A673 (cell line): ENCODE measurements at regions of chr18 and their contacts with region 1.

Region 1: GRCh38 chr18:62131301-62131909 is 55.5 kb downstream of the PIGN start:
- DNase-seq: peak; percentile 69
- H3K4me3 ChIP-seq: no peak overlapping the region
- H3K27ac ChIP-seq: no peak overlapping the region
- H3K4me1 ChIP-seq: peaks cover 5% of the 10 kb centered on the region
- H3K27me3 ChIP-seq: no peaks in the 10 kb centered on the region
- CTCF ChIP-seq: peak; percentile 89

Region 2: DNA sequence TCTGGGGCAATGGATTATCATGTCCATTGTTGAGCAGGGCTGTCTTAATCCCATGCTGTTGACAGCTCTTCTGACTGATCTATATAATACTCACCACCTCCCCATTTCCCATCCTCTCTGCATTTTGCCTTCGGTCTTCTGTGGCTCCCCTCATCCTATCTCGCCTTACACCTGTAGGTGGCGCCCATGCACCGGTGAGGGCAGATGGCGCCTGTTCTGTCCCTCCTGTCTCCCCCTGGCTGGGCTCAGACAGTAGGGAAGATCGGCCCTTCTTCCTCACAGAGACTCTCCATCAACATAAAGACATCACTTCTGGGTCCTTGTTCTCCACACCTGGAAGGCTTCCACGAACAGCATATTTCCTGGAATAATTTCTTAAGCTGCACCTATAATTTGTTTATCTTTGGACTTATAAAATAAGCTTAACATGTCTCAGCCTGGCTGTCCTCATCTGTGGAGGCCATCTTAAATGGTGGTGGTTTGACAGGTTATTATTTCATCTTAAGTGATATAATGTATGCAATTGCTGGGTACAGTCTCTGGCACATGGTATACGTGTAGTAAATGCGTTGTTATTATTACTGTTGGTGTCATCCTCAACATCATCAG is 809.0 kb before region 1 on chr18:
- CTCF ChIA-PET with region 1: no interaction called
- POLR2A ChIA-PET with region 1: no interaction called
- intact Hi-C with region 1: loop called (anchors 2 kb)
- DNase-seq: peak; percentile 77
- H3K4me3 ChIP-seq: no peak overlapping the region
- H3K27ac ChIP-seq: no peak overlapping the region
- H3K4me1 ChIP-seq: no peaks in the 10 kb centered on the region
- H3K27me3 ChIP-seq: peaks cover 42% of the 10 kb centered on the region
- CTCF ChIP-seq: peak; percentile 92

Region 3: GRCh38 chr18:61551586-61551985 is 579.8 kb before region 1 on chr18:
- CTCF ChIA-PET with region 1: no interaction called
- POLR2A ChIA-PET with region 1: no interaction called
- intact Hi-C with region 1: loop called (anchors 1 kb)
- DNase-seq: peak; percentile 83
- H3K4me3 ChIP-seq: no peak overlapping the region
- H3K27ac ChIP-seq: no peak overlapping the region
- H3K4me1 ChIP-seq: peaks cover 3% of the 10 kb centered on the region
- H3K27me3 ChIP-seq: no peaks in the 10 kb centered on the region
- CTCF ChIP-seq: peak; percentile 87

Region 4: DNA sequence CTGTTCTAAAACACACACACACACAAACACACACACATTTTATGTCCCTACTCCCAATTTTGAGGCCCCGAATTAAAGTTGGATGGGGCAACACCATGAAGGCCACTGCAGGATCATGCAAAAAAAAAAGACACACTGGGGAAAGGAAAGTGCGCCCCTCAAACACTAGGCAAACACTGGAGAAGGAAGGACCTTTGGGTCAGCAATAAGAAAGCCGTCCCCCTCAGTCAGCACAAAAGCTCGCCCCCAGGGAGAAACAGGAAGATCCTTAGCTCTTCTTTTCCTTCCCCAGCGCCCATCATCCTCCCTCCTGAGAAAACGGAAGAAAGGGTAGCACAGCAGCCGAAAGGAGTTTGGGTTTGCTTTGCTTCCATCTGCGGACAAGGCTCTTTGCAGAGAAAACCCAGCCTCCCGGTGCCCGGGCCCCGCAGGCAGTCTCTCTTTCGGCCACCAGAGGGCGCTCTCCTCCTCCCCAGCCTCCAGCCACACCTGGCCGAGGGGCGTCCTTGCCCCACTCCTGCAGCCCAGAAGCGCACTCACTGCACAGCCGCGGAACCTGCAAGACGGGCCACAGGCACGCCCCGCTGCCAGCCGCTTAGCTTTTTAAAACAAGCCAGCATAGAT is 549.7 kb before region 1 on chr18:
- CTCF ChIA-PET with region 1: no interaction called
- POLR2A ChIA-PET with region 1: no interaction called
- intact Hi-C with region 1: loop called (anchors 2 kb)
- DNase-seq: peak; percentile 79
- H3K4me3 ChIP-seq: peak overlapping the region; percentile 43
- H3K27ac ChIP-seq: no peak overlapping the region
- H3K4me1 ChIP-seq: peaks cover 1% of the 10 kb centered on the region
- H3K27me3 ChIP-seq: no peaks in the 10 kb centered on the region
- CTCF ChIP-seq: peak; percentile 99

Region 5: DNA sequence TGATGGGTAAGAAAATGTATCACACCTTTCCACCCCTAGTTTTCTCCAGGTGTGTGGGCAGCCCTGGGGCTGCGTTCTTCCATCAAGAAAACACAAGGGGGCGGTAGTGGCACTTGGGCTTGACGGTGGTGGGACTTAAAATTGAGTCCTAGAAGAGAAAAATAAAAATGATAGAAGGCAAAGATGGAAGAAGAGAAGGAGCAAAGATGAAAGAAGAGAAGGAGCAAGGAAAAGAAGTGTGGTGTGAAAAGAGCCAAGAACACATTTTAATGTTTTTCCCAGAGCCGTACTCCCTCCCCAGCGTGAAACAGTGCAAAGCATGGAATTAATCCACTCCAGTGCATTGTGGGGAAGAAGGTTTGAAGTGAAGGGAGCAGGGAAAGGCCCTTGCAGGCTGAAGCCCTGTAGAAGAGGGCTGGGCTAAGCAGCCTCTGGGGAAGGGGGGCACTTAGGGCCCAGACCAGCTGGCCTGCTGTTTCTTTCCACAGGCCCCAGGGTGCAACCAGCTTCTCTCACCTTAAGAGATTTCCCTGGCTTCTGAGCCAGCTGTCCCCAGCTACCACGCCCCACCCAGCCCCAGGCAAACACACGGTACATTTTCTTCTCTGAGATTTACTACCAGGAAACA is 495.4 kb before region 1 on chr18:
- CTCF ChIA-PET with region 1: no interaction called
- POLR2A ChIA-PET with region 1: no interaction called
- intact Hi-C with region 1: loop called (anchors 1 kb)
- DNase-seq: peak; percentile 60
- H3K4me3 ChIP-seq: no peak overlapping the region
- H3K27ac ChIP-seq: no peak overlapping the region
- H3K4me1 ChIP-seq: no peaks in the 10 kb centered on the region
- H3K27me3 ChIP-seq: no peaks in the 10 kb centered on the region
- CTCF ChIP-seq: peak; percentile 93

Region 6: DNA sequence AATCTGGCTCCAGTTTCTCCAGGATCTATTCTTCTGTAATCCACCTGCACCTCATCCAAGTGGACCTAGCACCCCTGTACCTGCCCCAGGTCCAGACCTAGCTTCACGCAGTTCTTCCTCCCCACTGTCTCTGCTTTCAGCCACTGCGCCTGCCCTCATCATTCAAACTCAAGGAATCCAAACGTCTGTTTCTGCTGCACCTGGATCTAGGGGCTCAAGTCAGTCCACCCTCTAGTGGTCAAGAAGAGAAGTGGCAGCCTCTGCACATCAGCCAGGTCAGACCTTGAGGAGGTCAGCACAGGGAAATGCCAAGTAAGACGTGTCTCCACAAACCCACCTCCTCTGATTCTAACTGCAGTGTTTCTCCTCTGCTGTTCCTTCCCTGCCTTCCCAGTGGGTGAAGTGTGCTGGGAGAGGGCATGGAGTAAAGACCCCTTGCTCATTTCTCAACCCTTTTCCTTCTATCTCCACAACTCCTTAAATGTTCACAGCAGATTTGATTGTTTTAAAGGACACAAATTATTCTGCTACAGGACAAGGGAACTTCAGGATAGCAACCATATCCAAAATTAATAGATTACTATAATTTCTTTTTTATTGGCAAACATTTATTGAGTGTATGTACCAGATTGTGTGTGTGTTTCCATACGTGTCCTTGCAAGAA is 229.9 kb before region 1 on chr18:
- CTCF ChIA-PET with region 1: no interaction called
- POLR2A ChIA-PET with region 1: no interaction called
- intact Hi-C with region 1: loop called (anchors 5 kb)
- DNase-seq: peak; percentile 61
- H3K4me3 ChIP-seq: no peak overlapping the region
- H3K27ac ChIP-seq: no peak overlapping the region
- H3K4me1 ChIP-seq: no peaks in the 10 kb centered on the region
- H3K27me3 ChIP-seq: no peaks in the 10 kb centered on the region
- CTCF ChIP-seq: peak; percentile 91